A549 (cell line): ENCODE measurements at regions of chr12 and their contacts with region 1.

Region 1: GRCh38 chr12:54368709-54369583 is 4.7 kb upstream of the GPR84 start:
- DNase-seq: peak; percentile 82 to 87
- ATAC-seq: peak; percentile 63 to 78
- H3K4me3 ChIP-seq: no peak overlapping the region
- H3K27ac ChIP-seq: peak overlapping the region; percentile 46 to 84
- H3K4me1 ChIP-seq: peaks cover 52% of the 10 kb centered on the region
- CTCF ChIP-seq: peak; percentile 91
- EP300 ChIP-seq: no peak
- POLR2A ChIP-seq: no peak
- RAD21 ChIP-seq: peak; percentile 86 to 94

Region 2: GRCh38 chr12:54294152-54294952 is 74.6 kb before region 1 on chr12:
- CTCF ChIA-PET with region 1: interaction called, 71 read pairs
- POLR2A ChIA-PET with region 1: no interaction called
- DNase-seq: peak; percentile 68 to 83
- ATAC-seq: peak; percentile 31 to 51; a peak in 4 of 6 replicates
- H3K4me3 ChIP-seq: no peak overlapping the region
- H3K27ac ChIP-seq: no peak overlapping the region
- H3K4me1 ChIP-seq: no peaks in the 10 kb centered on the region
- CTCF ChIP-seq: peak; percentile 67
- EP300 ChIP-seq: no peak
- POLR2A ChIP-seq: no peak
- RAD21 ChIP-seq: peak; percentile 64 to 82

Region 3: GRCh38 chr12:54337280-54337842 is 31.6 kb before region 1 on chr12:
- CTCF ChIA-PET with region 1: interaction called, 125 read pairs
- POLR2A ChIA-PET with region 1: interaction called, 3 read pairs
- DNase-seq: no peak
- ATAC-seq: no peak
- H3K4me3 ChIP-seq: no peak overlapping the region
- H3K27ac ChIP-seq: no peak overlapping the region
- H3K4me1 ChIP-seq: 0 out of 3 replicates have a peak, but pooled peaks cover 2% of the 10 kb centered on the region
- CTCF ChIP-seq: no peak
- EP300 ChIP-seq: no peak
- POLR2A ChIP-seq: no peak
- RAD21 ChIP-seq: no peak

Region 4: GRCh38 chr12:54388235-54389138 is 19.5 kb after region 1 on chr12:
- CTCF ChIA-PET with region 1: interaction called, 14 read pairs
- POLR2A ChIA-PET with region 1: no interaction called
- DNase-seq: no peak
- ATAC-seq: no peak
- H3K4me3 ChIP-seq: no peak overlapping the region
- H3K27ac ChIP-seq: no peak overlapping the region
- H3K4me1 ChIP-seq: peaks cover 22% of the 10 kb centered on the region; the same call in 2 of the 3 replicates
- CTCF ChIP-seq: no peak
- EP300 ChIP-seq: no peak
- POLR2A ChIP-seq: no peak
- RAD21 ChIP-seq: no peak

Region 5: GRCh38 chr12:54398995-54399793 is 30.2 kb after region 1 on chr12:
- CTCF ChIA-PET with region 1: interaction called, 20 read pairs
- POLR2A ChIA-PET with region 1: no interaction called
- DNase-seq: peak; percentile 85 to 96
- ATAC-seq: peak; percentile 82 to 94
- H3K4me3 ChIP-seq: no peak overlapping the region
- H3K27ac ChIP-seq: no peak overlapping the region
- H3K4me1 ChIP-seq: no peaks in the 10 kb centered on the region
- CTCF ChIP-seq: peak; percentile 96
- EP300 ChIP-seq: no peak
- POLR2A ChIP-seq: no peak
- RAD21 ChIP-seq: peak; percentile 95 to 99

Region 6: GRCh38 chr12:54535474-54535873 is 166.5 kb after region 1 on chr12:
- CTCF ChIA-PET with region 1: no interaction called
- POLR2A ChIA-PET with region 1: no interaction called
- DNase-seq: no peak
- ATAC-seq: no peak
- H3K4me3 ChIP-seq: no peak overlapping the region
- H3K27ac ChIP-seq: no peak overlapping the region
- H3K4me1 ChIP-seq: no peaks in the 10 kb centered on the region
- CTCF ChIP-seq: no peak
- EP300 ChIP-seq: no peak
- POLR2A ChIP-seq: no peak
- RAD21 ChIP-seq: no peak